CD4-positive, alpha-beta T cell (primary cell): ENCODE measurements at regions of chr14 and their contacts with region 1.

Region 1: DNA sequence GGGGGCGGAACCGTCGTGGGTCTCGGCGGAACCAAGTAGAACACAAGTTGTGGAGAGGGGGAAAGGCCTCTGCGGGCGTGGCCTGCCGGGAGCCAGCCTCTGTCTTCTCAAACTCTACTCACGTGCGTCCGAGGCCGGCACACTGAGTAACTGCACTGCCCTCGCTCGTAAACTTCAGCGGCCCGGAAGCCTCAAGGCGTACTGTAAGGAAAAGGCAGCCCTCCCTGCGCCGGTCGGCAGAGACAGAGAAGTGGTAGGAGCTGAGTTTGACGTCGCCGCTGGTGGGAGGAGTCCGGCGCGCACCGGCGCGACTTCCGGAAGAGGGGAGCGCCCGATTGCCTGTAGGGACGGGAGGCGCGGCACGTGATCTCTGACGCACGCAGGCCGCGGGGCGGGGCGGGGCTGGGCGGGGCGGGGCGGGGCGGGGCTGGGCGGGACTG is at the start of gene FBXO33:
- DNase-seq: peak; percentile 94 to 98 (median 96)
- ATAC-seq: peak; percentile 81
- H3K4me3 ChIP-seq: peak within 1 kb of the TSS; percentile 88
- H3K4me3 Mint-ChIP-seq: peak within 1 kb of the TSS; percentile 100
- H3K27ac ChIP-seq: peak within 1 kb of the TSS; percentile 99 to 100
- H3K27ac Mint-ChIP-seq: peak within 1 kb of the TSS; percentile 100
- H3K4me1 ChIP-seq: peaks cover 31% of the 10 kb centered on the region
- H3K4me1 Mint-ChIP-seq: peaks cover 50% of the 10 kb centered on the region
- H3K27me3 ChIP-seq: no peaks in the 10 kb centered on the region
- H3K27me3 Mint-ChIP-seq: no peaks in the 10 kb centered on the region
- CTCF ChIP-seq: no peak
- total RNA-seq, gene FBXO33: 94.6 to 97.4 TPM

Region 2: GRCh38 chr14:39114073-39114838 is 317.9 kb before region 1 on chr14 and contains the start of gene GEMIN2:
- CTCF ChIA-PET with region 1: no interaction called
- POLR2A ChIA-PET with region 1: interaction called, 33 read pairs
- intact Hi-C with region 1: loop called in 1 of 2 experiments (anchors 1 kb)
- DNase-seq: peak; percentile 85 to 98 (median 92)
- ATAC-seq: peak; percentile 98
- H3K4me3 ChIP-seq: peak within 1 kb of the TSS; percentile 72
- H3K4me3 Mint-ChIP-seq: peak within 1 kb of the TSS; percentile 99
- H3K27ac ChIP-seq: peak within 1 kb of the TSS; percentile 55 to 65
- H3K27ac Mint-ChIP-seq: peak within 1 kb of the TSS; percentile 91
- H3K4me1 ChIP-seq: peaks cover 6% of the 10 kb centered on the region
- H3K4me1 Mint-ChIP-seq: peaks cover 17% of the 10 kb centered on the region
- H3K27me3 ChIP-seq: no peaks in the 10 kb centered on the region
- H3K27me3 Mint-ChIP-seq: no peaks in the 10 kb centered on the region
- CTCF ChIP-seq: no peak
- total RNA-seq, gene GEMIN2: 14.6 to 16.1 TPM

Region 3: GRCh38 chr14:39174560-39175444 is 257.4 kb before region 1 on chr14 and contains the start of gene PNN:
- CTCF ChIA-PET with region 1: no interaction called
- POLR2A ChIA-PET with region 1: interaction called, 66 read pairs
- intact Hi-C with region 1: loop called (anchors 2 to 5 kb)
- DNase-seq: peak; percentile 91 to 100 (median 93)
- ATAC-seq: peak; percentile 85
- H3K4me3 ChIP-seq: peak within 1 kb of the TSS; percentile 96
- H3K4me3 Mint-ChIP-seq: peak within 1 kb of the TSS; percentile 97
- H3K27ac ChIP-seq: peak within 1 kb of the TSS; percentile 89 to 95
- H3K27ac Mint-ChIP-seq: peak within 1 kb of the TSS; percentile 96
- H3K4me1 ChIP-seq: peaks cover 36% of the 10 kb centered on the region
- H3K4me1 Mint-ChIP-seq: peaks cover 59% of the 10 kb centered on the region
- H3K27me3 ChIP-seq: no peaks in the 10 kb centered on the region
- H3K27me3 Mint-ChIP-seq: no peaks in the 10 kb centered on the region
- CTCF ChIP-seq: no peak
- total RNA-seq, gene PNN: 110 to 111 TPM

Region 4: DNA sequence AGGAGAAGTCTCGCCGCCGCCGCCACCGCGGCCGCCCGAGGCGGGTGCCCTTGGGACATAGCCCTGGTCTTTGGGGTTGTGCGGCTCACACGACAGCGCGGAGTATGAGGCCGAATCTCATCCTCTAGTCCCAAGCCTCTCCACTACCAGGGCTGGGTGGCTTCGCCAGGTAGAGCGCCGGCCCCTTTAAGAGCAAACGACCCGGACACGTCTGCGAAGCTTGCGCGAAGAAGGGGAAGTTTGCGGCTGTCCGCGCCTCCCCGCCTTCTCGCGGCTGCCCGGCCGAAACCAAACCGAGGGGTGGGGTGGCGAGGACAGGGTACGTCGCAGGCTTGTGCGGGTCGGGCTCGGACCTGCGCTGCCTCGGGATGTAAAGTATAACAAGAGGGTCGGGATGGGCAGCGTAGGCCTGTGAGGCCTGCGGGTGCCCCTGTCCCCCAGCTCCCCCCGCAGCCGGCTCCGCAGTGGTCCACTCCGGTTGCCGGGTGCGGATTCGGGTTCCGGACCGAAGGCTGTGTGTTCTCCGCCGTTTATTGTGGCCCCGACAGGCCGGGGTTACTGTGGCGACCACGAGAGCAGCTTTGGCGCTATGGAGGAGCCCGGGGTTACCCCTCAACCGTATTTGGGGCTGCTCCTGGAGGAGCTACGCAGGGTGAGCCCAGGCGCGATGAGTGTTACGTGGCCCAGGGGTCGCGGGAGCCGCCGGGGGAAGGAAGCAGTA is 165.2 kb before region 1 on chr14:
- CTCF ChIA-PET with region 1: no interaction called
- POLR2A ChIA-PET with region 1: interaction called, 99 read pairs
- intact Hi-C with region 1: loop called (anchors 2 to 5 kb)
- DNase-seq: peak; percentile 54 to 90 (median 69)
- ATAC-seq: peak; percentile 69
- H3K4me3 ChIP-seq: peak overlapping the region; percentile 99
- H3K4me3 Mint-ChIP-seq: peak overlapping the region; percentile 99
- H3K27ac ChIP-seq: peak overlapping the region; percentile 89 to 96
- H3K27ac Mint-ChIP-seq: peak overlapping the region; percentile 97
- H3K4me1 ChIP-seq: peaks cover 31% of the 10 kb centered on the region
- H3K4me1 Mint-ChIP-seq: peaks cover 62% of the 10 kb centered on the region
- H3K27me3 ChIP-seq: no peaks in the 10 kb centered on the region
- H3K27me3 Mint-ChIP-seq: no peaks in the 10 kb centered on the region
- CTCF ChIP-seq: no peak

Region 5: DNA sequence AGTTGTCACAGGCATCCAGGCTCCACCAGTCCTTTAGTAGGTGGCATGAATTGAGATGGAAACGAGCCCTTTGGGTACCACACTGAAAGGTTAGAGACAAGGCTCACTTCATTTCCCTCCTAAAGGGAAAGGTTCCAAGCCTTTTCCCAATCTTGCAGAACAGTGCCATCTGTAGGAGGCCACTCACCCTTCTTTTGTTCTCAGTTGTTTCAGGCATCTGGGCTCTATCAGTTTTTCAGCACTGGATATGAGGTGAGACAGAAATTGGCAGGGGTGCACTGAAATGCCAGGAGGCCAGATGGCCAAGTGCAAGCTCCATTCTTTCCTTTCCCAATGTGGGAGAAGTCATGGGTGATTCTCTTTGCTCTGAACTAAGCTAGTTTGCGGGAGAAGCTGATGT is 15.2 kb before region 1 on chr14:
- CTCF ChIA-PET with region 1: no interaction called
- POLR2A ChIA-PET with region 1: interaction called, 30 read pairs
- intact Hi-C with region 1: loop called in 1 of 2 experiments (anchors 2 kb)
- DNase-seq: no peak
- ATAC-seq: no peak
- H3K4me3 ChIP-seq: no peak overlapping the region
- H3K4me3 Mint-ChIP-seq: no peak overlapping the region
- H3K27ac ChIP-seq: no peak overlapping the region
- H3K27ac Mint-ChIP-seq: no peak overlapping the region
- H3K4me1 ChIP-seq: peaks cover 4% of the 10 kb centered on the region
- H3K4me1 Mint-ChIP-seq: peaks cover 52% of the 10 kb centered on the region
- H3K27me3 ChIP-seq: no peaks in the 10 kb centered on the region
- H3K27me3 Mint-ChIP-seq: no peaks in the 10 kb centered on the region
- CTCF ChIP-seq: no peak

Region 6: GRCh38 chr14:39614297-39614923 is 182.2 kb after region 1 on chr14:
- CTCF ChIA-PET with region 1: no interaction called
- POLR2A ChIA-PET with region 1: no interaction called
- intact Hi-C with region 1: no loop called
- DNase-seq: no peak
- ATAC-seq: no peak
- H3K4me3 ChIP-seq: no peak overlapping the region
- H3K4me3 Mint-ChIP-seq: no peak overlapping the region
- H3K27ac ChIP-seq: no peak overlapping the region
- H3K27ac Mint-ChIP-seq: no peak overlapping the region
- H3K4me1 ChIP-seq: no peaks in the 10 kb centered on the region
- H3K4me1 Mint-ChIP-seq: no peaks in the 10 kb centered on the region
- H3K27me3 ChIP-seq: no peaks in the 10 kb centered on the region
- H3K27me3 Mint-ChIP-seq: no peaks in the 10 kb centered on the region
- CTCF ChIP-seq: no peak

Region 7: DNA sequence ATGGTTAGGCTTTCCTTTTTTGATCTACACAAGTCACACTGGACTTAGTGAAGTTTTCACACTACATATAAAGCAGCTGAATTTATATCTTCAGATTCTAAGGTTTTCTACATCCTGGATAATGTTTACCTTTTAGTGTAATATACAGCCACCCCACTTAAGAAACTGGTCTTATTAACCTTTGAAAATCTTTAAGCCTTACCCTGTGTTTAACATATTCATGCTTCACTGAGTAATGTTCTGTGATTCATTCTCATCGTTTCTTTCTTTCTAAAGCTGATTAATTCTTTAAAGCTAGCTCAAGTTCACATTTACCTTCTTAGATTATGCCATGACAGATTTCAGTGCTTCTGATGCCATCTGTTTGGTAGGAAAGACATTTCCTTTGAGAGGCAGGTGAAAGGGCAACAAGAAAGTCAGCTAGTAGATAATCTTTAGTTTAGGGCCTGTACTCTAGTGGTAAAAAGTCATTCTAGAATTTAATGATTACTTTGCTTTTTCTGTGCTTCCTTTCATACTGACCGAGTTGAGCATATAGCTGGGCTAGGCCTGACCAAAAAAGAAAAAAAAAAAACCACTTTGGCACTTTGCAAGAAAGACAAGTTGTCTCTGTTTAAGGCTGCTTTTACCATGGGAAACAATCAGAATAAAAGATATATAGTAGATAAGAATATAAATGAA is 690.9 kb after region 1 on chr14:
- CTCF ChIA-PET with region 1: no interaction called
- POLR2A ChIA-PET with region 1: no interaction called
- intact Hi-C with region 1: no loop called
- DNase-seq: no peak
- ATAC-seq: no peak
- H3K4me3 ChIP-seq: no peak overlapping the region
- H3K4me3 Mint-ChIP-seq: no peak overlapping the region
- H3K27ac ChIP-seq: no peak overlapping the region
- H3K27ac Mint-ChIP-seq: no peak overlapping the region
- H3K4me1 ChIP-seq: no peaks in the 10 kb centered on the region
- H3K4me1 Mint-ChIP-seq: no peaks in the 10 kb centered on the region
- H3K27me3 ChIP-seq: no peaks in the 10 kb centered on the region
- H3K27me3 Mint-ChIP-seq: no peaks in the 10 kb centered on the region
- CTCF ChIP-seq: no peak